ENCODE measurements at regions of chr13 and their contacts with region 1.

Region 1: GRCh38 chr13:55745828-55746227 is 1394.9 kb upstream of the PRR20A start:
- DNase-seq: no peak
- H3K4me3 ChIP-seq: no peak overlapping the region
- H3K4me3 Mint-ChIP-seq: no peak overlapping the region
- H3K27ac ChIP-seq: no peak overlapping the region
- H3K27ac Mint-ChIP-seq: no peak overlapping the region
- H3K4me1 ChIP-seq: no peaks in the 10 kb centered on the region
- H3K4me1 Mint-ChIP-seq: no peaks in the 10 kb centered on the region
- H3K27me3 ChIP-seq: no peaks in the 10 kb centered on the region
- H3K27me3 Mint-ChIP-seq: no peaks in the 10 kb centered on the region

Region 2: DNA sequence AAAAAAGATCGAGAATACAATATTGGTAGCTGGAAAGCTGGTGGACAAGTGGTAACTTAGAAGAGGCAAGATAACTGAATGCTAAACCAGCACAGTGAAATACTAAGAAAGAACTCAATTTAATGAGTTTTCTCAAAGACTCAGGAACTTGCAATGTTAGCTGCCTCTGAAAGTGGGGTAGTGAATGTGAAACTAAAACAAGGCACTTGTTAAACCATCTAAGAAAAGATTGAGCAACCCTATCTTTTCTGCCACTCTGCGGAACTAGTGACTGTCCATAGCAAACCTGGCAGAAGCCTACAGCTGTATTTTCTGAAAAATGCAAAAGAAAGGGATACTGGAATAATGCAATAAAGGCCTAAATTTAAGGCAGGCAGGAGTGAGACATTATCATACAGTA is 179.5 kb before region 1 on chr13:
- CTCF ChIA-PET with region 1: no interaction called
- POLR2A ChIA-PET with region 1: no interaction called
- intact Hi-C with region 1: loop called (anchors 5 kb)
- DNase-seq: no peak
- H3K4me3 ChIP-seq: no peak overlapping the region
- H3K4me3 Mint-ChIP-seq: no peak overlapping the region
- H3K27ac ChIP-seq: no peak overlapping the region
- H3K27ac Mint-ChIP-seq: no peak overlapping the region
- H3K4me1 ChIP-seq: no peaks in the 10 kb centered on the region
- H3K4me1 Mint-ChIP-seq: no peaks in the 10 kb centered on the region
- H3K27me3 ChIP-seq: no peaks in the 10 kb centered on the region
- H3K27me3 Mint-ChIP-seq: no peaks in the 10 kb centered on the region

Region 3: DNA sequence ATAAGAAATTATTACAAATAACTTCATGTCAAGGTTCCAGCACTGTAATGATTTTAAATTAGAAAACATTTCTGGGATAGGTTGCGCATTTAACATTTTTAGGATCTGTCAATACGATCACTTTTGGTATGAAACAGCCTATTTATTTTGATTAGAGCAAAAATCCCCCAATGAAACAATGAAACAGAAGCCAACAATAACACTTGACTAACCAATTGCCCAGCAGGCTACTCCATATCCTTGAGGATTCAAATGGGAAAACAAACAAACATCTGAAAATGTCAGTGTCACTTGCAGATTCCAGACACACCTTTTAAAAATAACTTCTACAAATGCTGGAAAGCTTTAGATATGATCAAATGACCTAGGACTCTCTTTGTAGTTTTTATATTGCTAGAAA is 17.6 kb before region 1 on chr13:
- CTCF ChIA-PET with region 1: no interaction called
- POLR2A ChIA-PET with region 1: no interaction called
- intact Hi-C with region 1: no loop called
- DNase-seq: no peak
- H3K4me3 ChIP-seq: no peak overlapping the region
- H3K4me3 Mint-ChIP-seq: no peak overlapping the region
- H3K27ac ChIP-seq: no peak overlapping the region
- H3K27ac Mint-ChIP-seq: no peak overlapping the region
- H3K4me1 ChIP-seq: no peaks in the 10 kb centered on the region
- H3K4me1 Mint-ChIP-seq: no peaks in the 10 kb centered on the region
- H3K27me3 ChIP-seq: no peaks in the 10 kb centered on the region
- H3K27me3 Mint-ChIP-seq: no peaks in the 10 kb centered on the region

Measured in CD4-positive, alpha-beta memory T cell (primary cell).